WTC11 (cell line): ENCODE measurements at regions of chr12 and their contacts with region 1.

Region 1: GRCh38 chr12:13203034-13203922 is 6.8 kb downstream of the EMP1 start:
- DNase-seq: peak; percentile 80
- ATAC-seq: peak; percentile 94
- H3K4me3 Mint-ChIP-seq: no peak overlapping the region
- H3K27ac Mint-ChIP-seq: peak overlapping the region; percentile 87; the same call in 1 of the 2 replicates
- H3K4me1 Mint-ChIP-seq: peaks cover 68% of the 10 kb centered on the region
- H3K27me3 Mint-ChIP-seq: peaks cover 9% of the 10 kb centered on the region
- CTCF ChIP-seq: no peak

Region 2: DNA sequence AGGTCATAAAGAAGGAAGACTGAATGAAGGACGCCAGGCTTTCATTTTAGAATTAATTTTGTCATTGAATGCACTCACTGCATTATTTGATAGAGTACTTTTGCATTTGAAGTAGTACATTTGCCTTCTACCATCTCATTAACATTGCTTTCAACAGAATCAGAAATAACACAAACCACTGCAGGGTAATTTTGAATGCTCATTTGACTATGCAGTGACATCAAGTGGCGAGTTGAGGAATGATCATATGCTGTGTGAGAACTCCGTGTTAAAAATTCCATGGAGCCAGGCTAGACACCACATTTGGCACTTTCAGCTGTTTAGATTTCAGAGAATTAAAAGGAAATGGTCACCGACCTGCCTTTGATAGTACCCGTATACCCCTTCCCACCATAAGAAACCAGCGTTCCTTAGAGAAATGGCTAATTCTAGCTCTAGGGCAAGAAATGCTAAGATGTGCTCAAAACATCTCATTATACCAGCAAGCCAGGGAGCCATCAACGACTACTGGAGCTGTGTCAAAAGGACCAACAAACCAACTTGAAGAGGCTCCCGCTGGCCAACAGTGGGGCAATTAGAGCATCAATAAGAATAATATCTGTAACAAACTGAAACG is 219.8 kb before region 1 on chr12:
- CTCF ChIA-PET with region 1: interaction called, 10 read pairs
- POLR2A ChIA-PET with region 1: no interaction called
- DNase-seq: no peak
- ATAC-seq: no peak
- H3K4me3 Mint-ChIP-seq: no peak overlapping the region
- H3K27ac Mint-ChIP-seq: 0 out of 2 replicates have a peak overlapping the region, but pooled peaks have one; percentile 19
- H3K4me1 Mint-ChIP-seq: peaks cover 18% of the 10 kb centered on the region
- H3K27me3 Mint-ChIP-seq: no peaks in the 10 kb centered on the region
- CTCF ChIP-seq: no peak

Region 3: DNA sequence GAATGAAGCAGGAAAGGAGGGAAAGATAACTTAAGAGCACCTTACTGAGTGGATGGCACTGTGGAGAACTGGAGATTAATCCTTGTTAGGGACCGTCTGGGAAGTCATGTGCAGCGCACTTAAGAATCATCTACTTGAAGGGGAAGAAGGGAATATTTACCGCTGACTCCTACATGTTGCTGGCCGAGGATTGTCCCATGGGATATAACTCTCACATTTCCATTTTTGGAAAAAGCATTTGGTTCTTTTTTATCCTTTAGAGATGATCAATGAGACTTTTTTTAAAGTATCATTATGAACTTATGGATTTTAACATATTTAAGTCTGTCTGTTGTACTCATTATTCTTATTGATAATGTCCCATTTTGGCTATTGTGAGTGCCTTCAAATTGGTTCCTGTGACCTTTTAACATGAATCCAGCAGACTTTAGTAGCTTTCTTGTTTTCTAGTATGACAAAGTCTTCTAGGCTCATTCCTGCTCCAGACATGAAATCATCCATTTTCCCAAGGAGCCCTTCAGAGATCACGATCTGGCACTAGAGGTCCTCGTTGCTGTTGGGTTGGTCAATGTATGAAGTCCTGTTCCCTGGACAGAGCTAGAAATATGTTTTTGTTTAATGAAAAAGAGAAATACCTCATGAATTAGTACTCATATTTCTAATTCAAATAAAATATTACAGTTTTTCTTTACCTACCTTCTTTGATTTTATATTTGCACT is 179.3 kb before region 1 on chr12:
- CTCF ChIA-PET with region 1: interaction called, 13 read pairs
- POLR2A ChIA-PET with region 1: no interaction called
- DNase-seq: no peak
- ATAC-seq: peak; percentile 76
- H3K4me3 Mint-ChIP-seq: no peak overlapping the region
- H3K27ac Mint-ChIP-seq: no peak overlapping the region
- H3K4me1 Mint-ChIP-seq: peaks cover 8% of the 10 kb centered on the region
- H3K27me3 Mint-ChIP-seq: no peaks in the 10 kb centered on the region
- CTCF ChIP-seq: no peak

Region 4: GRCh38 chr12:13100882-13101769 is 102.2 kb before region 1 on chr12:
- CTCF ChIA-PET with region 1: interaction called, 40 read pairs
- POLR2A ChIA-PET with region 1: no interaction called
- DNase-seq: peak; percentile 87
- ATAC-seq: peak; percentile 83
- H3K4me3 Mint-ChIP-seq: peak overlapping the region; percentile 74
- H3K27ac Mint-ChIP-seq: peak overlapping the region; percentile 36
- H3K4me1 Mint-ChIP-seq: peaks cover 46% of the 10 kb centered on the region
- H3K27me3 Mint-ChIP-seq: peaks cover 3% of the 10 kb centered on the region
- CTCF ChIP-seq: no peak

Region 5: GRCh38 chr12:13223179-13223859 is 20.0 kb after region 1 on chr12:
- CTCF ChIA-PET with region 1: no interaction called
- POLR2A ChIA-PET with region 1: no interaction called
- DNase-seq: no peak
- ATAC-seq: no peak
- H3K4me3 Mint-ChIP-seq: no peak overlapping the region
- H3K27ac Mint-ChIP-seq: no peak overlapping the region
- H3K4me1 Mint-ChIP-seq: no peaks in the 10 kb centered on the region
- H3K27me3 Mint-ChIP-seq: no peaks in the 10 kb centered on the region; the same call in 1 of the 2 replicates
- CTCF ChIP-seq: no peak